PC-3 (cell line): ENCODE measurements at regions of chr4 and their contacts with region 1.

Region 1: DNA sequence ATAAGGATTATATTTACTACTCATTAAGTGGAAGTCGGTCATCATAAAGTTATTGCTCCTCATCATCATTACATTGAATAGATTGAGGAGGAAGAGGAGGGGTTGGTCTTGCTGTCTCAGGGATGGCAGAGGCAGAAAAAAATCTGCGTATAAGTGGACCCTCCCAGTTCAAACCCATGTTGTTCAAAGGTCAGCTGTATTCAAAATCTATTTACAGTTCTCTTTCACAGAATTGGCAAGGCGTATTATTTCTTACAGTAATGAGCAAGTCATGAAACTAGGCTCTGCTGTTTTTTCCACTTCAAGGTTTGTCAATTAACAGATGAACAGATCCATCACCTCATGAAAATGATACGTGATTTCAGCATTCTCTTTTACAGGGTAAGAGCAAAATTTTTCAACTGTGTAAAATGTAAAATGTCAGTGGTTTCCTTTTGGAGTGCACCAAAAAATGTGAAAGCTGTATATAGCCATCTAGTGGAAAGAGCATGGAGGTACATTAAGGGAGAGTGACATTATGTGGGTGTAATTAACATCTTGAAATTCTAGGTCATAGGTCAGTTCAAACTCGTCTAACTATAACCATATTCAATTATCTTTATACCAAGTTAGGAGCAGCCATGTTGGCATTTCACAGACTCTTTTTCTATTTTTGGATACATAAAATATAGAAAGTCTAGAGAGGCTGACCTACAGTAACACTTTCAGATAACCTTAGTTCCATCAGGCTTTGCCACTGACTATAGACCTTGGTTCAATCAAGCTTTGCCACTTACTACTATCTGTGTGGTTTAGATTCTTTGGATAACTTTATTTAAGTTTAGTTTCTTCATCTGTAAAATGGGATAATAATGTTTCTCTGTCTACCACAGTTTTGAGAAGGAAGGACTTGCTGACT is 30.1 kb downstream of the NEIL3 start:
- DNase-seq: peak; percentile 31
- ATAC-seq: peak; percentile 48; the same call in 1 of the 2 replicates
- H3K4me3 ChIP-seq: no peak overlapping the region
- H3K27ac ChIP-seq: no peak overlapping the region
- H3K4me1 ChIP-seq: no peaks in the 10 kb centered on the region
- H3K27me3 ChIP-seq: no peaks in the 10 kb centered on the region
- CTCF ChIP-seq: peak; percentile 66

Region 2: DNA sequence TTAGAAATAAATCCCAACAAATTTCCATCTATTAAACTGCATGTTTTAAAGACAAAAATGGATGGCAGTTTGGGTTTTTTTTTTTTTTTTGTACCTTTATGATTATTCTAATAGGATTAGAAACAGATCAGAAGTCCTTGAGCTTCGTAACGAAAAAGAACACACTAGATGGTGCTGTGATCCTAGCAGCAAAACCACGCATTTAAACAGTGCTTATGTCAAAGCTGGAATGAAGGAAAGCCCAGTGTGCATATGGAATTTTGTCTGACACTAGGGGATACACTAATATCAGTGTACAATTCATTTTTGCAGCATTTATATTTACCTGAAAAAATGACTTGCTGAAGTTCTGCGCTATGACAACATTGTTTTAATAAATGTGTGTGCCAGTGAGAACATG is 776.1 kb before region 1 on chr4:
- CTCF ChIA-PET with region 1: no interaction called
- POLR2A ChIA-PET with region 1: no interaction called
- intact Hi-C with region 1: loop called (anchors 10 kb)
- DNase-seq: peak; percentile 54
- ATAC-seq: peak; percentile 53
- H3K4me3 ChIP-seq: no peak overlapping the region
- H3K27ac ChIP-seq: no peak overlapping the region
- H3K4me1 ChIP-seq: peaks cover 14% of the 10 kb centered on the region
- H3K27me3 ChIP-seq: no peaks in the 10 kb centered on the region
- CTCF ChIP-seq: peak; percentile 46

Region 3: GRCh38 chr4:177108708-177109107 is 231.0 kb before region 1 on chr4:
- CTCF ChIA-PET with region 1: no interaction called
- POLR2A ChIA-PET with region 1: no interaction called
- intact Hi-C with region 1: loop called (anchors 1 kb)
- DNase-seq: peak; percentile 17
- ATAC-seq: peak; percentile 56; the same call in 1 of the 2 replicates
- H3K4me3 ChIP-seq: no peak overlapping the region
- H3K27ac ChIP-seq: no peak overlapping the region
- H3K4me1 ChIP-seq: no peaks in the 10 kb centered on the region
- H3K27me3 ChIP-seq: no peaks in the 10 kb centered on the region
- CTCF ChIP-seq: peak; percentile 54

Region 4: GRCh38 chr4:177214935-177215334 is 124.8 kb before region 1 on chr4:
- CTCF ChIA-PET with region 1: no interaction called
- POLR2A ChIA-PET with region 1: no interaction called
- intact Hi-C with region 1: no loop called
- DNase-seq: peak; percentile 46
- ATAC-seq: no peak
- H3K4me3 ChIP-seq: no peak overlapping the region
- H3K27ac ChIP-seq: no peak overlapping the region
- H3K4me1 ChIP-seq: no peaks in the 10 kb centered on the region
- H3K27me3 ChIP-seq: no peaks in the 10 kb centered on the region
- CTCF ChIP-seq: no peak

Region 5: DNA sequence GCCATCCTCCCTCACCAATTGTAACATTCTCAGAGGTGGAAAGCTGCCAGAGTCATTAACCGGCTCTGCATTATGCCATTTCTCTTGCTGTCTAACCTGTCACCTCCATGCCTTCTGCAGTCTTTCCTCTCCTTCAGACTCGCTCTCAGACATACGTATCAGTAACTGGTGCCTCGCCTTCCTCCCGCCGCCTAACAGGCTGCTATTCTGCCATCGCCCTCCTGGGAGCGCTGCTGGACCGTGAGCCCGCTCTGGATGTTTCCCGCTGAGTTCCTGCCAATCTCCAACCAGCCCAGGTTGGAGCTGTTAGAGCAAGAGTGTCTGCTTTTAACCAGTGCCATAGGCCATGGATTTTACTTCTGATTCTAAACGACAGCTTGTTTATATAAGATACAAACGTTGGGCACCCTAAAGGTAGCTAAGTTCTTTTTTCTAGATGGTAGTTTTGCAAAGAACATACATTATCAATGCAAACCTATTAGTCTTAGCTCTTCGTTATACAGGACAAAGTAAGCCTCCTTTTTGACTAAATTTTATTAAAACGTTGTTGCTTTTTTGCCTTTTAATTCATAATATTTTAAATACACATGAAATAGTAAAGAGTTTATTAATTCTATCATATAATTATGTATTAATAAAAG is 89.5 kb before region 1 on chr4:
- CTCF ChIA-PET with region 1: no interaction called
- POLR2A ChIA-PET with region 1: no interaction called
- intact Hi-C with region 1: loop called (anchors 1 kb)
- DNase-seq: peak; percentile 69
- ATAC-seq: peak; percentile 88
- H3K4me3 ChIP-seq: no peak overlapping the region
- H3K27ac ChIP-seq: no peak overlapping the region
- H3K4me1 ChIP-seq: peaks cover 16% of the 10 kb centered on the region; the same call in 1 of the 2 replicates
- H3K27me3 ChIP-seq: no peaks in the 10 kb centered on the region
- CTCF ChIP-seq: peak; percentile 90

Region 6: DNA sequence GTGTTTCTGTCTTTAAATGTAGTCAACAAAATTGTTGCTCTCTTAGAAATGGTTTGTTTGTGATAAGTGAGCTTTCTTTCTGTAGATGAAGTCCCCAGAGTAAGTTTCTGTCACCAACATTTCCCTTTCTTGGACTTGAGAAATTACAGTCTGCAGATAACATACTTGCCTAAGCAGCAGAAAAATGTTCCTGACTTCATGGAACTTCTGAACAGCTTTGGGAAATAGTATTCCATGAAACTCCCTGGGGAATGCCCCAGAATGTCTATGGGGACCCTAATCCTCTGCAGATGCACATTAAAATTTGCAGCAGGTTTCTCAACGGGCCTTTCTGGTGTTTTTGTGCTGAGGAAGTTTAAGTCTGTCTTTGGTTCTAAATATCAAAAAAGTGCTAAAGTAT is 68.6 kb before region 1 on chr4:
- CTCF ChIA-PET with region 1: no interaction called
- POLR2A ChIA-PET with region 1: no interaction called
- intact Hi-C with region 1: no loop called
- DNase-seq: no peak
- ATAC-seq: no peak
- H3K4me3 ChIP-seq: no peak overlapping the region
- H3K27ac ChIP-seq: no peak overlapping the region
- H3K4me1 ChIP-seq: no peaks in the 10 kb centered on the region
- H3K27me3 ChIP-seq: no peaks in the 10 kb centered on the region
- CTCF ChIP-seq: no peak

Region 7: GRCh38 chr4:177283167-177283566 is 56.6 kb before region 1 on chr4:
- CTCF ChIA-PET with region 1: no interaction called
- POLR2A ChIA-PET with region 1: no interaction called
- intact Hi-C with region 1: no loop called
- DNase-seq: no peak
- ATAC-seq: no peak
- H3K4me3 ChIP-seq: no peak overlapping the region
- H3K27ac ChIP-seq: no peak overlapping the region
- H3K4me1 ChIP-seq: no peaks in the 10 kb centered on the region
- H3K27me3 ChIP-seq: no peaks in the 10 kb centered on the region
- CTCF ChIP-seq: no peak